Stomach (tissue), 19 donors: ENCODE measurements at regions of chr4 and their contacts with region 1.

Region 1: DNA sequence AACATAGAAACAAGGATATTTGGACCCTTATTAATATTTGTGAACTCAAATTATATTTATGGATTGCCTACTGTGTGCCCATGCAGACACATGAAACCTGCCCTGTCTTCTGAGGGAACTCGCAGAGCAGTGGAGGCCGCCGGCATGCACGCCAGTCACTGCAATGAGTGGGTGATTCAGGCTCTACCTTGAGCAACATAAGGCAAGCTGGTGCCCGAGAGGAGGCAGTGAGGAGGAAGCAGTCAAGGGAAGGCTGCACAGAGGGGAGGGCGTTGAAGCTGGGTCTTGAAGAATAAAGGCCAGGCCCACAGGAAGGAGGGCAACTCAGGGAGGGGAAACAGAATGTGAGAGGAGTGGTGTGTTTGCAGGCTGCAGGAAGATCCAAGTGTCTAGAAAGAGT is 52.8 kb downstream of the PPEF2 start:
- DNase-seq: peak in 1 of 2 donors; percentile 6
- H3K4me3 ChIP-seq: no peak overlapping the region
- H3K27ac ChIP-seq: no peak overlapping the region
- H3K4me1 ChIP-seq: peaks cover 0 to 9% (median 4%) of the 10 kb centered on the region in 4 donors
- H3K27me3 ChIP-seq: no peaks in the 10 kb centered on the region
- CTCF ChIP-seq: no peak
- EP300 ChIP-seq: no peak
- POLR2A ChIP-seq: no peak

Region 2: DNA sequence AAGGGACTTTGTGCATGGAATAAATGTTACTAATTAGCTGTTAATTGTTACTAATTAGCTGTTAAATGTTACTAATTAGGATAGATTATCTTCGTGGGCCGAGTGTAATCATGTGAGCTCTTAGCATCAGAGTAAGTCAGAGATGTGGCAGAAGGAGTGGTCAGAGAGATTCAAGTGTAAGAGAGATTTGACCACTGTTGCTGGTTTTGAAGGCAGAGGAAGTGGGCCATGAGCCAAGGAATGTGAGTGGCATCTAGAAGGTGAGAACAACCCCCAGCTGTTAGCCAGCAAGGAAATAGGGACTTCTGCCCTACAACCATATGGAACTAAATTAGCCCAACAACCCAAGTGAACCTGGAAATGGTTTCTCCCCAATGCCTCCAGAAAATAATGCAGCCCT is 265.4 kb before region 1 on chr4:
- intact Hi-C with region 1: loop called (anchors 5 kb)
- DNase-seq: no peak
- H3K4me3 ChIP-seq: no peak overlapping the region
- H3K27ac ChIP-seq: no peak overlapping the region
- H3K4me1 ChIP-seq: no peaks in the 10 kb centered on the region
- H3K27me3 ChIP-seq: no peaks in the 10 kb centered on the region
- CTCF ChIP-seq: no peak
- EP300 ChIP-seq: no peak
- POLR2A ChIP-seq: no peak